Common myeloid progenitor, CD34-positive (primary cell): ENCODE measurements at regions of chr3 and their contacts with region 1.

Region 1: GRCh38 chr3:14203521-14204079 is 25.0 kb downstream of the LSM3 start:
- DNase-seq: peak; percentile 83 to 93 (median 88)
- H3K4me3 ChIP-seq: no peak overlapping the region
- H3K27ac ChIP-seq: no peak overlapping the region
- H3K4me1 ChIP-seq: peaks cover 2 to 21% (median 18%) of the 10 kb centered on the region in 4 experiments
- H3K27me3 ChIP-seq: no peaks in the 10 kb centered on the region

Region 2: DNA sequence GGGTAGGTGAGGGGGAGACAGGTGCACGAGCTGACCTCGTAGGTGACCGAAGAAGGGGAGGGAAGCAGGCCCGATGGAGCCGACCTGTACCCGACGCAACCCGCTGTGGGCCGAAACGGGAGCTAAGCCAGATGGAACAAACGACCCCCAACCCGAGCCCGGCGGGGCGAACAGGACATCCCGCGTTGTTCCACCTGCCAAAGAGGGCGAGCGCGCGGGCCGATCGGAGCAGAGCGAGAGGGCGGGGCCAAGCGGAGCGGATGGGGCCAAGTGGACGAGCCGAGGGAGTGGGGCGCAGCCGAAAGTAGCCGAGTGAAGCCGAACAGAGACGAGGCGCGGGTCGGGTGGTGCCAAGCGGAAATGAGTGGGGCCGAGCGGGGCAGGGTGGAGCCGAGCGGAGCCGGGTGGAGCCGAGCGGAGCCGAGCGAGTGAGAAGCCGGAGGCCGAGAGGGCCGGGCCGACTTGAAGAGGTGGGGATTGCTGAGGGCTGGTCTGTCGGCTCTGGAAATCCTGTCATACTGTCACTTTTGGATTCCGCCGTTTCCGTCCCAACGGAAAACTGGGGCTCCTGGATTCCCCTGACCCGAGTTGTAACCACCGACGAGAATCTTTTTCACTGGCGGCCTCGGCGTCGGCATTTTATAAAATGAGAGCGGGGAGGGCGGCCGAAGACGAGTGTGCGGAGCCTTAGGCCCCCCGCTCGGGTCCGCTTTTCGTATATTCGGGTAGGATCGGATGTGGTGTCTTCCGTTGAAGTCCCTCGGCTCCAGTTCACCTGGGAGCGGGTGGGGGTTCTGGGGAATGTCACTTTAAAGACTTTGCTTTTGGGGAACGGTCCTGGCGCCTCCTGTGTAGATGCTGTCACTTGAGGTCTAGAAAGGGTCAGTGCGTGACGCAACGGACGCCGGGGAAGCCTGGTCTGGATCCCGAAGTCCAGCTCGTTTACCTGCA is 308.2 kb before region 1 on chr3:
- CTCF ChIA-PET with region 1: interaction called, 17 read pairs
- POLR2A ChIA-PET with region 1: no interaction called
- DNase-seq: peak; percentile 91 to 95 (median 95)
- H3K4me3 ChIP-seq: peak overlapping the region; percentile 53 to 89 (median 68)
- H3K27ac ChIP-seq: peak overlapping the region; percentile 76 to 82
- H3K4me1 ChIP-seq: peaks cover 12 to 37% (median 25%) of the 10 kb centered on the region in 4 experiments
- H3K27me3 ChIP-seq: peaks cover 0 to 5% (median 0%) of the 10 kb centered on the region in 5 experiments

Region 3: DNA sequence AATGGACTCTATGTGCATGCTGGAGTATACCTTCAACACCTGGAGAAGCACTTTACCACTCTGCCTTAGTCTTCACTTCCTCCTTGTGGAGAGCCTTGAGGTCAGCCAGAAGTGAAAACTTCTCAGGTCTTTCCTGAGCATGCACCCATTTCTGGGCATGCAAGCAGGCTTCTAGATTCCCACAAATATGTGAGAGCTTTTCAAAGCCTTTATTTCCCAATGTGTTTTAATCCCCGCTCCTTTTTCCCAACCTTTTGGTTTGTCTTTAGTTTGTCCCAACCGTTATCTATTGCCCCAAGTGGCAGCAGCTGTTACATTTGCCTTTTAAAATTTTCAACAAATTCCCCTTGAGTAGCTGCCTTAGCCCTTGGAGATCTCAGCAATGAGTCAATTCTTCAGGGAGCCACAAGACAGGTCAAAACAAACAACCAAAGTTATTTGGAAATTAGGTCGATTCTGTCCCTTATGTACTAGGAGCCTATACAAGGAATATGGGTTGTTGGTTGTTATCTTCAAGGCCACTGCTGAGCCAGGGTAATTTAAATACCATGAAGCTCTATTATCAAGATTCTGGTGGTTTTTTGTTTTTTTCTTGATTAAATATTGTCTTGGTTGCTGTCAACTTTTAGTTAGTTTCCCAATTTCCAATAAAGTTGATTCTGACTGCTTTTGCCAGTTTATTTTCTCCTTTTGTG is 19.4 kb after region 1 on chr3:
- CTCF ChIA-PET with region 1: interaction called, 65 read pairs
- POLR2A ChIA-PET with region 1: no interaction called
- DNase-seq: no peak
- H3K4me3 ChIP-seq: no peak overlapping the region
- H3K27ac ChIP-seq: no peak overlapping the region
- H3K4me1 ChIP-seq: peaks cover 0 to 8% (median 3%) of the 10 kb centered on the region in 4 experiments
- H3K27me3 ChIP-seq: no peaks in the 10 kb centered on the region

Region 4: DNA sequence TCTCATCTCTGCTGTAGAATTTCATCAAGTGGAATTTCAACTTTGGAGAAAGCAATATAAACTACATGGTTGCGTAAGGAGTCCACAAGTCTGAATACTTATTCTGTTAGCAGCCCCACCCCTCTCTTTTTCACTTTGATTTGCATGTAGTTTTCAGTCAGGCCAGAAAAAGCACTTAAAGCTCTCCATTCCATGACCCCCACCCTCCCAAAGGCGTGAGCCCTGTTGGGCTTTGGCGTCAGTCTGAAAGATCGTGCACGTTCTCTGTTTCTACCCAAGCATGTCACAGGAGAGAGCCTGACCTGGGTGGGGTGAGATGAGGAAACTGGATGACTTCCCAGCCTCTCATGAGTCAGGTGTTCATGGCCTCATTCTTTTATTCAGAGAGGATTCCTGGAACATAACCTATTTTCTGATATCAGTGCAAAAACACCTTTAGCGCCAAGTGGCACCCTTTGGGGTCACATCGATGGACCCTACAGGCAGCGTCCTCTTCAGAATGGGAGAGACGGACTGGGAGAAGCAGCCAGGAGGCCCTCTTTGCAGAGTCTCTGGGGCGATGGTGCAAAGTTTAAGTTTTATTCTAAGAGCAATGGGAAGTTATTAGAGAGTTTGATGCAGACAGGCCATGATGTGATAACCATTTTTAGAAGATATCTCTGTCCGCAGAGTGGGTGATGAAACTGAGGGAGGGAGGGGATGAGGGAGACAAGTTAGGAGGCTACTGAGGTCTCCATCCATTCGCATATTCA is 30.8 kb after region 1 on chr3:
- CTCF ChIA-PET with region 1: interaction called, 65 read pairs
- POLR2A ChIA-PET with region 1: interaction called, 5 read pairs
- DNase-seq: no peak
- H3K4me3 ChIP-seq: no peak overlapping the region
- H3K27ac ChIP-seq: no peak overlapping the region
- H3K4me1 ChIP-seq: peaks cover 15 to 52% (median 40%) of the 10 kb centered on the region in 4 experiments
- H3K27me3 ChIP-seq: no peaks in the 10 kb centered on the region

Region 5: GRCh38 chr3:14261229-14261628 is 57.6 kb after region 1 on chr3:
- CTCF ChIA-PET with region 1: interaction called, 84 read pairs
- POLR2A ChIA-PET with region 1: no interaction called
- DNase-seq: peak; percentile 59 to 68 (median 65)
- H3K4me3 ChIP-seq: no peak overlapping the region
- H3K27ac ChIP-seq: no peak overlapping the region
- H3K4me1 ChIP-seq: peaks cover 0 to 4% (median 2%) of the 10 kb centered on the region in 4 experiments
- H3K27me3 ChIP-seq: peaks cover 0 to 2% (median 0%) of the 10 kb centered on the region in 5 experiments

Region 6: GRCh38 chr3:14467814-14468620 is 264.4 kb after region 1 on chr3:
- CTCF ChIA-PET with region 1: interaction called, 51 read pairs
- POLR2A ChIA-PET with region 1: no interaction called
- DNase-seq: peak; percentile 14 to 49 (median 32)
- H3K4me3 ChIP-seq: no peak overlapping the region
- H3K27ac ChIP-seq: no peak overlapping the region
- H3K4me1 ChIP-seq: no peaks in the 10 kb centered on the region
- H3K27me3 ChIP-seq: no peaks in the 10 kb centered on the region